ENCODE measurements at regions of chr9 and their contacts with region 1.

Region 1: GRCh38 chr9:33816327-33817252 is at the start of gene UBE2R2:
- DNase-seq: peak; percentile 86 to 96
- H3K4me3 ChIP-seq: peak within 1 kb of the TSS; percentile 73 to 89
- H3K27ac ChIP-seq: peak within 1 kb of the TSS; percentile 93 to 98
- H3K4me1 ChIP-seq: peaks cover 0 to 48% (median 24%) of the 10 kb centered on the region in 4 donors
- H3K27me3 ChIP-seq: no peaks in the 10 kb centered on the region
- CTCF ChIP-seq: no peak

Region 2: GRCh38 chr9:33852216-33852826 is 35.7 kb after region 1 on chr9:
- intact Hi-C with region 1: loop called (anchors 5 kb)
- DNase-seq: peak; percentile 81 to 83
- H3K4me3 ChIP-seq: no peak overlapping the region
- H3K27ac ChIP-seq: no peak overlapping the region
- H3K4me1 ChIP-seq: peaks cover 0 to 50% (median 16%) of the 10 kb centered on the region in 4 donors
- H3K27me3 ChIP-seq: no peaks in the 10 kb centered on the region
- CTCF ChIP-seq: peak; percentile 63 to 76

Region 3: GRCh38 chr9:34048923-34049697 is 232.5 kb after region 1 on chr9:
- intact Hi-C with region 1: loop called (anchors 5 kb)
- DNase-seq: peak; percentile 98
- H3K4me3 ChIP-seq: peak overlapping the region; percentile 80 to 84
- H3K27ac ChIP-seq: peak overlapping the region; percentile 83 to 86
- H3K4me1 ChIP-seq: peaks cover 0 to 20% (median 17%) of the 10 kb centered on the region in 4 donors
- H3K27me3 ChIP-seq: no peaks in the 10 kb centered on the region
- CTCF ChIP-seq: no peak